ENCODE measurements at regions of chr11 and their contacts with region 1.

Region 1: DNA sequence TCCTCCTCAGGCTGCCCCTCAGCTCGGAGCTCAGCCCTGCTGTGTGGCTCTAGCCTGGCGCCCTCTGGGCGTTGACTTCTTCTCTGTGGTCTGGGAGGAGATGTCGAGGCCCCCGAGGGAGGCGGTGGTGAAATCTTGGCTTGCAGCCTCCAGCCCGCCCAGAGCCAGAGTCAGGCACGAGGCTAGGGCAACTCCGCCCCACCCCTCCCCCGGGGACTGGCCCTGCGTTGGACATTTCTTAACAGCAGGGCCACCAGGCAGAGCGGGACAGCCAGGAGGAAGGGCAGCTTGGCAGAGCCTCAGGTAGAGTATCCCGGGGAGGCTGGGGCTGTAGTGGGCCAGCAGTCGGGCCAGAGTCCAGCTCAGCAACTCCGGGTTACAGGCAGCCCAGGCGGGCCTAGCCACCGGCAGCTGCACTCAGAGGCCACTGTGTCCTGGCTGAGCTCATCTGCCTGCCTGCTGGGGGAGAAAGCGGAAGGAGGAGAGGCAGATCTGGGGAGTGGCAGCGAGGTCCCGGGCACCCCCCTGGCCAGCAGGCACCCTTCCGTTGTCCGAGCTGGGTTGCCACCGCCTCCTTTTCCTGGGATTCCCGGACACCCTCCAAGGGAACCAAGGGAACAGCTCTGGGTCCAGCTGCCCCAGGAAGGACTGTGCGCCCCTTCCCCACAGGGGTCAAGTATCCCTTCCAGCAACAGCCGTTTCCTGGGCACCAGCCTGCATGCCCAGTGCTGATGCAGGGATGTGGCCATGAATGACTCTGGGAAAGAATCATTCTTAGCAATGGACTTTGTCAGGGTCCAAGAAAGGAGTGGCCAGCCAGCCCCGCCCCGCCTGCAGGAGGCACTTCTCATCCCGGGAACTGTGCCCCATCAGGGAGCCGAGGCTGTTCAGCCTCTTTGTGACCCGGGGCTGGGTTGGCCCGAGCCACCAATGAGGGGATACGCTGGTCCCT is at the start of gene ALDH3B1:
- DNase-seq: peak; percentile 81 to 97
- ATAC-seq: peak; percentile 32 to 59
- H3K4me3 ChIP-seq: peak within 1 kb of the TSS; percentile 66
- H3K27ac ChIP-seq: peak within 1 kb of the TSS; percentile 99 to 100
- H3K4me1 ChIP-seq: peaks cover 74% of the 10 kb centered on the region
- CTCF ChIP-seq: no peak
- EP300 ChIP-seq: peak in 1 of 2 experiments; percentile 78; a peak in 3 of 5 replicates
- POLR2A ChIP-seq: peak; percentile 85
- RAD21 ChIP-seq: no peak
- polyA plus RNA-seq, gene ALDH3B1: 109 and 130 TPM in 2 replicates

Region 2: GRCh38 chr11:68020575-68020974 is 10.2 kb after region 1 on chr11:
- CTCF ChIA-PET with region 1: interaction called, 204 read pairs
- POLR2A ChIA-PET with region 1: interaction called, 37 read pairs
- DNase-seq: peak; percentile 70 to 83
- ATAC-seq: peak; percentile 53 to 67
- H3K4me3 ChIP-seq: no peak overlapping the region
- H3K27ac ChIP-seq: peak overlapping the region; percentile 99 to 100
- H3K4me1 ChIP-seq: peaks cover 64% of the 10 kb centered on the region
- CTCF ChIP-seq: peak; percentile 44
- EP300 ChIP-seq: no peak
- POLR2A ChIP-seq: no peak
- RAD21 ChIP-seq: peak; percentile 30 to 48; a peak in 4 of 5 replicates

Region 3: DNA sequence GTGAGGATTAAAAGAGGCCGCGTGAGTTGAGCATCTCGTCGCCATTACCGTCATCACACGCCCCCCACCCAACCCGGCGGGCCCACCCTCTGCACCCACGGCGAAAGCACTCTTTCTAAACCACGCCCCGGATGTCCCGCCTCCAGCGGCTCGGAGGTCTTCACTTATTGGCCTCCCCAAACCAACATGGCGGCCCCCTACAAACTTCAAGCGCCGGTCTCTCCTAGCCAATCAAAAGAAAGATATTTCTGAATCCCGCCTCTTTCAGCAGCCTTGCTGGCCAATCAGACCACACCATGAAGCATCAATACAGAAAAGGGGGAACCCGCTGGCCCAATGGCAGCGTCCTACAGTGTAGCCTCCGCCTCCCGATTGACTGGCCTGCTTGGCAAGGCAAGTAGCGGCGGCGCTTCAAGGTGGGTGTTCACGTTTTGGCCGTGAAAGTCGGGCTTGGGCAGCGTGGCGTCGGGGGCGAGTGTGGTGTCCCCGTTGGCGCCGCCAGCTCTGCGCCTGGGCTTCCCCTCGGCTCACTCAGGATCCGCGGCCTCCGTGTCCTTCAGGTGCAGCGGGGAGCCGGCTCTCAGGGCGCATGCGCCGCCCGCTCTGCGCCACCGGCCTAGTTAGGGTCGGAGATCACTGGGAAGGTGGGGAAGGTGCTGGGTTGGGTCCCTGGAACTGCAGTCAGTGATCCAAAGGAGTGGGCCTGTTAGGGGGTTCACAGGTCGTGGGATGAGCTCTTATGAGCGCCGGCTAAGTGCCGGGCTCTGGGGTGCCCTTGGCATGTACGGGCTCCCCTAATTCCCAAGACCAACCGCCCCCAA is 20.2 kb after region 1 on chr11 and contains the start of gene NDUFS8:
- CTCF ChIA-PET with region 1: interaction called, 204 read pairs
- POLR2A ChIA-PET with region 1: interaction called, 37 read pairs
- DNase-seq: peak; percentile 99
- ATAC-seq: peak; percentile 78 to 91
- H3K4me3 ChIP-seq: peak within 1 kb of the TSS; percentile 94
- H3K27ac ChIP-seq: peak within 1 kb of the TSS; percentile 94 to 98
- H3K4me1 ChIP-seq: peaks cover 68% of the 10 kb centered on the region
- CTCF ChIP-seq: no peak
- EP300 ChIP-seq: no peak
- POLR2A ChIP-seq: peak; percentile 64
- RAD21 ChIP-seq: no peak
- polyA plus RNA-seq, gene NDUFS8: 71.0 and 73.7 TPM in 2 replicates

Region 4: DNA sequence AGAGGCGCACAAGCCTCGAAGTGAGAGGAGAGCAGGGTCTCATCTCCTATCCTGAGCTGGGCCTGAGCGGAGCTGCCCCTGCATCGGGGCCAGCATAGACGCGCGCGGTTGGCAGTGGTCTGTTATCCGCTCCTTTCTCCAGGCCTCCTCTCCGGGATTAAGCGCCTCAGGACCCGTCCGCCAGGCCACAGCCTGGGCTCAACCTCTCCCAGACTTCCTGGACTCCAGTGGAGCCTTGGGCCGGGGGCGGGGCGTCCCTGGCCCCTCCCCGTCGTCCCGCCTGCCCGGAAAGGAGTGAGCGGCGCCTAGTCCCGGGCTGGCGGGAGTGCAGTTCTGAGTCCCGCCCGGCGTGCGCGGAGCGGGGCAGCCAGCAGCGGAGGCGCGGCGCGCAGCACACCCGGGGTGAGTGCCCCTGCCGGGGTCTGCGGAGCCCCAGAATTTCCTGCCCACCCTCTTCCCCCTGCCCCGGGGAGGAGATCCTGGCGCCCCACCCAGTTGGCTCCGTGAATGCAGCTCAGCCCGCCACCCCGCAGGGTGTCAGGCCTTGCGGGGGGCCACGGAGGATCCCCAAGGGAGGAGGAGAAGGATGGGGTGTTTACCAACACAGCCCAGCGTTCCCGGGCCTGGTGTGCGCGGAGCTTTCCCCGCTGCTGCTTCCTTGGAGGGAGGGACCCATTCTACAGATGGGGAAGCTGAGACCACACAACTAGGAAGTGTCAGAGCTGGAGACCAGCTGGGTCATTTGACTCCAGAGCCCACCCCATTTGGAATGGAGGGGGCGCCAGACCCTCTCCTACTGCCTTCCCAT is 28.6 kb after region 1 on chr11 and contains the start of gene TCIRG1:
- CTCF ChIA-PET with region 1: interaction called, 32 read pairs
- POLR2A ChIA-PET with region 1: interaction called, 13 read pairs
- DNase-seq: peak; percentile 80 to 93
- ATAC-seq: peak; percentile 65 to 86
- H3K4me3 ChIP-seq: peak within 1 kb of the TSS; percentile 60
- H3K27ac ChIP-seq: peak within 1 kb of the TSS; percentile 95 to 96
- H3K4me1 ChIP-seq: peaks cover 51% of the 10 kb centered on the region
- CTCF ChIP-seq: no peak
- EP300 ChIP-seq: no peak
- POLR2A ChIP-seq: peak; percentile 75; the same call in 1 of the 2 replicates
- RAD21 ChIP-seq: no peak
- polyA plus RNA-seq, gene TCIRG1: 36.3 and 49.4 TPM in 2 replicates

Region 5: DNA sequence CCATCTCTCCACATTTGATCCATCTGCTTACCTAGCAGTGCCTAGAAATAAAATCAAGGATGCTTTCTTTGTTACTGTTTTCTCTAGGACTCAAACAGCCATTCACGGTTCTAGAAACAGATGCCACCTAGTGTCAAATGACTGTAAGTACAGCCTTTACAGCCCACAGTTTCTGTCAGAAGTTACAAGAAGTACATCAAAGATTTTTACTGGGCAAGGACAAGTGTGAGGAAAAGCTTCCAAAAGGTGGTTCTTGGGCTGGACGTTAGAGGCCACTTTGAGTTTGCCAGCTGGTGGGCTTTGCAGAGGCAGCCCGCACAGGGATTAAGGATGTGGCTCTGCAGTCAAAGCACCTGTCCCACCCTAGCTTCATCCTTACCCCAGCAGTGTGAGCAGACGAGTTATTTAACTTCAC is 195.8 kb after region 1 on chr11:
- CTCF ChIA-PET with region 1: interaction called, 10 read pairs
- POLR2A ChIA-PET with region 1: no interaction called
- DNase-seq: peak; percentile 60 to 73
- ATAC-seq: peak; percentile 65 to 74; a peak in 5 of 6 replicates
- H3K4me3 ChIP-seq: no peak overlapping the region
- H3K27ac ChIP-seq: no peak overlapping the region
- H3K4me1 ChIP-seq: peaks cover 22% of the 10 kb centered on the region
- CTCF ChIP-seq: peak; percentile 74
- EP300 ChIP-seq: no peak
- POLR2A ChIP-seq: no peak
- RAD21 ChIP-seq: peak; percentile 63 to 74

Measured in A549 (cell line).